WTC11 (cell line): ENCODE measurements at regions of chr1 and their contacts with region 1.

Region 1: DNA sequence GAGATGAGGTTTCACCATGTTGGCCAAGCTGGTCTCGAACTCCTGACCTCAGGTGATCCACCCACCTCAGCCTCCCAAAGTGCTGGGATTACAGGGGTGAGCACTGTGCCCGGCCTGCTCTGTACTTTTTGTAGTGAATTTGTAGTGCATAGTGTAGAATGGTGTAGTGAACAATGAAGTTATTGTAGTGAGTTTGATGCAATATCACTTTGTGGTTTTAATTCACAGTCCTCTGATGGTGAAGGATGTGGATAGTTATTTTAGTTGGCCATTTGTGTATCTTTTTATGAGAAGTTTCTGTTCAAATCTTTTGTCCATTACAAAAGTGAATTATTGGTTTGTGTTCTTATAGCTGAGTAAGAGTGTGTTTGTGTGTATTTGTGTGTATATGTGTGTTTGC is 57.6 kb downstream of the PDE4B start:
- DNase-seq: no peak
- ATAC-seq: no peak
- H3K4me3 Mint-ChIP-seq: no peak overlapping the region
- H3K27ac Mint-ChIP-seq: no peak overlapping the region
- H3K4me1 Mint-ChIP-seq: no peaks in the 10 kb centered on the region
- H3K27me3 Mint-ChIP-seq: peaks cover 3% of the 10 kb centered on the region; the same call in 1 of the 2 replicates
- CTCF ChIP-seq: no peak

Region 2: DNA sequence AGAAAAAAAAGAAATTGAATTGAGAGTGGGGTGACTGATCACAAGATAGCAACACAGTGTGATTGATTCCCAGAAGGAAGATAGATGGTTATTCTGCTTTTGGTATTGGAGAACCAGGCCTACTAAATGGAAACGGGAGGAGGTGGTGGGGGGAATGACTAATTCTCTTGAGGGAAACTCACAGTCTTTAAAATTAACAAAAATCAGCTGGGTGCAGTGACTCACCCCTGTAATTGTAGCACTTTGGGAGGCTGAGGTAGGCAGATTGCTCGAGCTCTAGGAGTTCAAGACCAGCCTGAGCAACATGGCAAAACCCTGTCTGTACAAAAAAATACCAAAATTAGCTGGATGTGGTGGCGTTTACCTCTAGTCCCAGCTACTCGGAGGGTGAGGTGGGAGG is 192.2 kb before region 1 on chr1:
- CTCF ChIA-PET with region 1: no interaction called
- POLR2A ChIA-PET with region 1: no interaction called
- DNase-seq: no peak
- ATAC-seq: no peak
- H3K4me3 Mint-ChIP-seq: no peak overlapping the region
- H3K27ac Mint-ChIP-seq: no peak overlapping the region
- H3K4me1 Mint-ChIP-seq: no peaks in the 10 kb centered on the region
- H3K27me3 Mint-ChIP-seq: peaks cover 17% of the 10 kb centered on the region
- CTCF ChIP-seq: no peak

Region 3: GRCh38 chr1:65894738-65895605 is 44.7 kb after region 1 on chr1:
- CTCF ChIA-PET with region 1: no interaction called
- POLR2A ChIA-PET with region 1: interaction called, 10 read pairs
- DNase-seq: no peak
- ATAC-seq: no peak
- H3K4me3 Mint-ChIP-seq: no peak overlapping the region
- H3K27ac Mint-ChIP-seq: no peak overlapping the region
- H3K4me1 Mint-ChIP-seq: 0 out of 2 replicates have a peak, but pooled peaks cover 3% of the 10 kb centered on the region
- H3K27me3 Mint-ChIP-seq: no peaks in the 10 kb centered on the region
- CTCF ChIP-seq: no peak